ENCODE measurements at regions of chr5 and their contacts with region 1.

Region 1: DNA sequence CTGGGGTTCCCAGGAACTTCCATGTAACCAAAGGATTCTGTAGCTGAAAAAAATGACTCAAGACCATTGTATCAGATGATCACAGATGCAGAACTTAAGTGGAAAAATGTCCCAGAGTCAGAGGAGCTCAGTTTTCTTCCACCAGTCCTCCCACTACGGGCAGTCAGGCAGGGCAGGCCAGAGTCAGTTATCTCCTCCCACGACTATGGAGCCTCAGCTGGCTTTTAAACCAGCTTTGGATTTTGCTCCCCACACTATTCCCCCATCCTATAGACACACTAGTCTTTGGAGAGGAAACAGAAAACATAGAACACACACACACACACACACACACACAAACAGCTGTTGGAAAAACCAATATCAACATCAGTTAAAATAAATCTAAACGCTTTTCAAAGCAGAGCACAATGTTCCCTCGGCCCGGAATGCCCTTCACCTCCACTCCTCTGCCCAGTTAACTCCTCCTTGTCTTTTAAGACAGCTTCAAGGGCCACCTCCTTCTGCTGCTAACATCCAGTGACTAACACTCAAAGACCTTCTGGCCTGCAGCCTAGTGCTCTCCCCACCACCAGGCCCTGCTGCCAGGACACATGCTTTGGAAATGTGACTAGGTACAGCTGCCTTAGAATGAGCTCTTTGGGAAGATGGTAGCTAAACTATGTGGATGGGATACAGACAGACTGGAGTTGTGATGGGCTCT is 56.8 kb downstream of the NIPAL4 start:
- DNase-seq: peak; percentile 90
- H3K4me3 Mint-ChIP-seq: peak overlapping the region; percentile 2
- H3K27ac Mint-ChIP-seq: peak overlapping the region; percentile 21
- H3K4me1 Mint-ChIP-seq: peaks cover 32% of the 10 kb centered on the region
- H3K27me3 Mint-ChIP-seq: no peaks in the 10 kb centered on the region
- CTCF ChIP-seq: no peak

Region 2: DNA sequence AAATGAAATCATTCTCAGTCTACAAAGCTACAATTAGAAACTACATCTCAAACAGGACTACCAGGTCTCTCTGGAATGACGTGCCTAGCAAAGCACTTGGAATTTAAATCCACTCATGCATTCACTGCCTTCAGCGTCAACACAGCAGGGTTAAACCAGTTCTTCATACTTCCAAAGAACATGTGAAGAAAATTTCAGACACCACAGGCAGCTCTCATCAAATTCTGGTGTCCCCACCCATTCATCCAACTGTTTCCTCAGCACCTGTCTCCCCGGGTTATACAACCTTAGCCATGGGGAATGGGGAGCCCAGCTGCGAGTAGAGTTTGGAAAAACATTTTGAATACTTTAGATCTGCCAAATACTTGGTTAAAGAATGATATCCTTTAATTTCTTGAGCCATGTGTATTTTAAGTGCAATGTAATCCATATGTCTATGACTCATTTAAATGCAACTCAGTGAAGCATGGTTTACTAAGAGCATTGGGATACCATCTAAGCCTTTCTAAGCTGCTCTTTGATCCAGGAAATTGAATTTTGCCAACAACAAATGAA is 41.3 kb after region 1 on chr5:
- CTCF ChIA-PET with region 1: interaction called, 3 read pairs
- POLR2A ChIA-PET with region 1: interaction called, 9 read pairs
- intact Hi-C with region 1: loop called (anchors 2 kb)
- DNase-seq: peak; percentile 66
- H3K4me3 Mint-ChIP-seq: no peak overlapping the region
- H3K27ac Mint-ChIP-seq: no peak overlapping the region
- H3K4me1 Mint-ChIP-seq: peaks cover 38% of the 10 kb centered on the region
- H3K27me3 Mint-ChIP-seq: no peaks in the 10 kb centered on the region
- CTCF ChIP-seq: no peak